MCF 10A (cell line): ENCODE measurements at regions of chrX and their contacts with region 1.

Region 1: DNA sequence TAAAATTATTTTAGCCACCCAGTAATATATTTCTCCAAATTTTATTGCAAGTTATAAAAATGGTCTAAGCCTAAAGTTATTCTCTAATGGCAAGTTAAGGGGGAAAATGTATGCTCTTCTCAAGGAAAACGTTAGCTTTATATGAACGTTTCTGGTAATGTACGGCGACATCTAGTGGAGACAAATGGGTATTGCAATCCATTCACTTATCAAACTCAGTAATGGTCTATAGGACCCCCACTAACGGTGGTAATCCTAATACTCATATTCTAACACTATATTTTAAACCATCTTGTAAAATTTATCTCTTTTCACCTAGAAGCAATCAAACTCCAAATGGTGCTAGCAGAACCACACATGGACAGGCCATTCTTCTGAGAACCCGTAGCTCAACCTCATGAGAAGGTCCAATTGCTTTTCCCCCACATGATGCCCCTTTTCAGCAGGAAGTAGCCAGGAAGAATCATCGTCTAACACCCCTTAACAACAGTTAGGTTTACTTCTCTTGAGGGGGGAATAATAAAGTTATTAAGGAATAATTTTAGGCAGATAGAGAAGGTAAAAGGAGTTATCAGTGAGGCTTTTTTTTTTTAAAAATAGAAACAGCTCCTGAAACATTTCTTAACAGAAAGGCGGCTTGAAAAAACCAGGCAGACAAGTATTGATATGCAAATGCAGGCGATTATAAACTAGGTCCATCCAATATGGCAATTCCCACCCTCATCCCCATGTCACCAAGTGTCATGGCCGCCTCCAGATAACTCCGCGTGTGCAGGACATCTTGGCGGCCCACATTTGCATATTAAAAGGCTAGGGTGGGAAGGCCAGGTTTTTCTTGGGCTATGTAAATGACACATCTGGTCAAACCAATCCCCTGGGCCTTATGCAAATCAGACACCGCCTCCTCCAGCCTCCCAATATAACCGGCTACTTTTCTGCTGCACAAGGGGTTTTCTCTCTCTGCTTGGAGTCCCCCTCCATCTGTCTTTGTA is 35.0 kb downstream of the NUDT11 start:
- DNase-seq: peak; percentile 49
- H3K4me3 Mint-ChIP-seq: no peak overlapping the region
- H3K27ac Mint-ChIP-seq: no peak overlapping the region
- H3K4me1 Mint-ChIP-seq: no peaks in the 10 kb centered on the region
- H3K27me3 Mint-ChIP-seq: peaks cover 33% of the 10 kb centered on the region
- CTCF ChIP-seq: peak; percentile 76

Region 2: DNA sequence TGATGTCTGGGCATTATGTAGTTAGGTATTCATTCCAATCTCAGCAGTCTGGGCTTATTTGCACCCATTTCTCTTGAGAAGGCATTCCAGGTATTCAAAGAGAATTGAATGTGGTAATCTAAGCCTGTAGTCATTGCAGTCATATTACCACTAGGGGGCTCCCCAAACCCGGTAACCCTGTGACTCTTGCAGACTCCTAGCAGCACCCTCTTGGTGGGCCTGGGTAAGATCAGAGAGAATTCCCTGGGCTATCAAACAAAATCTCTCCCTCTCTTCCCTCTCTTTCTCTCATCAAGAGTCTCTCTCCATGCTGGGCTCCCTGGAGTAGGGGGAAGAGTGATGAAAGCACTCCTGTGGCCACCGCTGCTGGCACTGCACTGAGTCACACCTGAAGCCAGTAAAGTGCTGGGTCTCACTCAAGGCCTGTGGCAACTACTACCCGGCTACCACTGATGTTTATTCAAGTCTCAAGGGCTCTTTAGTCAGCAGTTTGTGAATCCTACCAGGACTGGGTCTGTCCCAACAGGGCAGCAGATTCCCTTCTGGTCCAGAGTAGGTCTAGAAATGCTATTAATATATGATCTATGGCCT is 316.4 kb before region 1 on chrX:
- CTCF ChIA-PET with region 1: interaction called, 6 read pairs
- POLR2A ChIA-PET with region 1: no interaction called
- intact Hi-C with region 1: loop called (anchors 5 kb)
- DNase-seq: peak; percentile 61
- H3K4me3 Mint-ChIP-seq: no peak overlapping the region
- H3K27ac Mint-ChIP-seq: no peak overlapping the region
- H3K4me1 Mint-ChIP-seq: no peaks in the 10 kb centered on the region
- H3K27me3 Mint-ChIP-seq: peaks cover 94% of the 10 kb centered on the region
- CTCF ChIP-seq: peak; percentile 68

Region 3: GRCh38 chrX:51336584-51336983 is 124.8 kb before region 1 on chrX:
- CTCF ChIA-PET with region 1: interaction called, 43 read pairs
- POLR2A ChIA-PET with region 1: interaction called, 4 read pairs
- intact Hi-C with region 1: loop called (anchors 1 kb)
- DNase-seq: peak; percentile 24
- H3K4me3 Mint-ChIP-seq: no peak overlapping the region
- H3K27ac Mint-ChIP-seq: no peak overlapping the region
- H3K4me1 Mint-ChIP-seq: no peaks in the 10 kb centered on the region
- H3K27me3 Mint-ChIP-seq: peaks cover 12% of the 10 kb centered on the region
- CTCF ChIP-seq: peak; percentile 39

Region 4: DNA sequence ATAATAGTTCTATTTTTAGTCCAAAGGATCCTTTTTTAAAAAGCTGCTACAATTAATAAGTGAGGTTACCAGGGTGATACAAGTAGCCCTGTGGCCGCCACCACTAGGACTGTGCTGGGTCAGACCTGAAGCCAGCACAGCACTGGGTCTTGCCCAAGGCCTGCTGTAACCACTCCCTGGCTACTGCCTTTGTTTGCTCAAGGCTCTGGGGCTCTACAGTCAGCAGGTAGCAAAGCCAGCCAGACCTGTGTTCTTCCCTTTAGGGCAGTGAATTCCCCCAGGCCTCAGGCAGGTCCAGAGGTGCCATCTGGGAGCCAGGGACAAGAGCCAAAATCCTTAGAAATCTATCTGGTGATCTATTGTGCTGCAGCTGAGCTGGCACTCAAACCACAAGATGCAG is 15.4 kb before region 1 on chrX:
- CTCF ChIA-PET with region 1: interaction called, 20 read pairs
- POLR2A ChIA-PET with region 1: interaction called, 3 read pairs
- intact Hi-C with region 1: no loop called
- DNase-seq: no peak
- H3K4me3 Mint-ChIP-seq: no peak overlapping the region
- H3K27ac Mint-ChIP-seq: no peak overlapping the region
- H3K4me1 Mint-ChIP-seq: no peaks in the 10 kb centered on the region
- H3K27me3 Mint-ChIP-seq: peaks cover 46% of the 10 kb centered on the region
- CTCF ChIP-seq: no peak

Region 5: DNA sequence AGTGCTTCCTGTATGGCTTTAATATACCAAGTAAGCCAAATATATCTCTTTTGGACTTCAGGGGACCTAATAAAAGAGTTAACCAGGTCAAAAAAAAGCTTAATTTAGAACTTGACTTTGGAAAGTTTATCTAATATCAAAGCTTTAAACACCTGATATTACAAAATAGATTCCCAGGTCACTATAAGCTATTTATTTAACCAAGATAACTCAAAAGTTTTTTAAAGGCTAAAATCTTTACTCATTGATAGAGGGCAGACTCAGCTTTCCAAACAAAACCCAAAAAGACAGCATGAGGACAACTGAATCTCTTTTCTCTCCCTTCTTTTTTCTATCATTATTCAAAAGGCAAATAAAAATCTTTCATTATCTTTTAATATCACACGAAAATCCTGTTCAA is 15.6 kb after region 1 on chrX:
- CTCF ChIA-PET with region 1: interaction called, 57 read pairs
- POLR2A ChIA-PET with region 1: no interaction called
- intact Hi-C with region 1: no loop called
- DNase-seq: no peak
- H3K4me3 Mint-ChIP-seq: no peak overlapping the region
- H3K27ac Mint-ChIP-seq: no peak overlapping the region
- H3K4me1 Mint-ChIP-seq: no peaks in the 10 kb centered on the region
- H3K27me3 Mint-ChIP-seq: peaks cover 47% of the 10 kb centered on the region
- CTCF ChIP-seq: no peak